ENCODE measurements at regions of chr19 and their contacts with region 1.

Region 1: GRCh38 chr19:16382775-16383543 is 58.3 kb downstream of the KLF2 start:
- DNase-seq: peak; percentile 59 to 90 (median 78)
- ATAC-seq: peak; percentile 69 to 80 (median 72)
- H3K4me3 ChIP-seq: peak overlapping the region in 1 of 2 donors; percentile 26
- H3K4me3 Mint-ChIP-seq: peak overlapping the region; percentile 58 to 69 (median 64)
- H3K27ac ChIP-seq: peak overlapping the region; percentile 69
- H3K27ac Mint-ChIP-seq: peak overlapping the region; percentile 92 to 95
- H3K4me1 ChIP-seq: peaks cover 26 to 79% of the 10 kb centered on the region in 2 experiments
- H3K4me1 Mint-ChIP-seq: peaks cover 64 to 66% (median 65%) of the 10 kb centered on the region in 3 donors
- H3K27me3 ChIP-seq: no peaks in the 10 kb centered on the region
- H3K27me3 Mint-ChIP-seq: no peaks in the 10 kb centered on the region

Region 2: GRCh38 chr19:16247353-16248182 is 135.4 kb before region 1 on chr19:
- CTCF ChIA-PET with region 1: interaction called, 11 to 26 read pairs
- POLR2A ChIA-PET with region 1: interaction called, 3 to 4 read pairs
- DNase-seq: peak; percentile 37 to 89 (median 76)
- ATAC-seq: peak; percentile 73 to 90 (median 81)
- H3K4me3 ChIP-seq: peak overlapping the region in 1 of 2 donors; percentile 15
- H3K4me3 Mint-ChIP-seq: peak overlapping the region in 2 of 3 donors; percentile 17 to 51
- H3K27ac ChIP-seq: no peak overlapping the region
- H3K27ac Mint-ChIP-seq: peak overlapping the region; percentile 35 to 83
- H3K4me1 ChIP-seq: peaks cover 22 to 34% of the 10 kb centered on the region in 2 experiments
- H3K4me1 Mint-ChIP-seq: peaks cover 20 to 41% (median 21%) of the 10 kb centered on the region in 3 donors
- H3K27me3 ChIP-seq: no peaks in the 10 kb centered on the region
- H3K27me3 Mint-ChIP-seq: no peaks in the 10 kb centered on the region

Region 3: DNA sequence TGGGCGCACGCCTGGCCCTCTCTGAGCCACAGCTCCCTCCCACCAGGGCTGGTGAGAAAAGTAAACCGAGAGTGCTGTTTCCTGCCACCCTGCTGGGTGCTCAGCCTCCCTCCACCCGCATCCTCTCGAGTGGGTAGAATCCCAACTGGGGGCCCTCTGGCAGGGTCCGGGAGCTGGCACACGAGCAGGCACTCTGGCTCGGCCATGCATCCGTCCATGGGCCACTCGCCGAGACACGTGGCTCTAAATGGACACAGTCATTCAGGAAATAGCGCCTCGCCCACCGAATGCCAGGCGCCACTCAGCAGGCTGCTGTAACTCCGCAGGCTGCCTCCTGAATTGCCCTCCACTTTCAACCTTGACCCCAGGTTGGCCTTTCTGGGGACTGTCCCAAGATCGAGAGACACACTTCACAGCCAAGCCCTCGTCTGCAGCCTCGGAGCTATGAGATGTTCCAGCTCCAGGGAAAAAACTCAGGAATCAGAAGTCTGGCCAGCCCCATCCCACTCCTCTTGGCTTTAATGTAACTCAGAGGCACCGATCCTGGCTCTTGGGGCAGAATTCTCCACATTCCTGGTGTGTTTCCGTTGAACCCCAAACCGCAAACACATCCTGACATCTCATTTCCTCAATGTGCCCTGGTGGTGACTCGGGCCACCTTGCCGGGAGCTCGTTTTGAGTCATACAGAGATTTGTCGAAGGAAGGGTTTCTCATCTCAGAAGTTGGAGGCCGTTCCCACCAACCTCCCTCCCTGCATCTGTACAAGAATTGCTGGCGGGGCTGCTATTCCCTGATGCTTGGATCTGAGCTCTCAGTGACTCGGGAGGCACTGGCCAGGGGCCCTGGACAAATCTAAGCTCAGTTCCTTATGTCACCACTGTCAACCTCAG is 44.2 kb before region 1 on chr19:
- CTCF ChIA-PET with region 1: interaction called, 4 to 16 read pairs
- POLR2A ChIA-PET with region 1: interaction called in 1 of 2 experiments, 3 read pairs
- DNase-seq: peak in 21 of 35 experiments; percentile 27 to 72 (median 44)
- ATAC-seq: peak; percentile 35 to 84 (median 79)
- H3K4me3 ChIP-seq: peak overlapping the region; percentile 30 to 35
- H3K4me3 Mint-ChIP-seq: peak overlapping the region; percentile 71 to 84 (median 83)
- H3K27ac ChIP-seq: peak overlapping the region; percentile 64
- H3K27ac Mint-ChIP-seq: peak overlapping the region; percentile 93 to 98
- H3K4me1 ChIP-seq: peaks cover 24 to 94% of the 10 kb centered on the region in 2 experiments
- H3K4me1 Mint-ChIP-seq: peaks cover 66 to 77% (median 71%) of the 10 kb centered on the region in 3 donors
- H3K27me3 ChIP-seq: no peaks in the 10 kb centered on the region
- H3K27me3 Mint-ChIP-seq: no peaks in the 10 kb centered on the region

Region 4: DNA sequence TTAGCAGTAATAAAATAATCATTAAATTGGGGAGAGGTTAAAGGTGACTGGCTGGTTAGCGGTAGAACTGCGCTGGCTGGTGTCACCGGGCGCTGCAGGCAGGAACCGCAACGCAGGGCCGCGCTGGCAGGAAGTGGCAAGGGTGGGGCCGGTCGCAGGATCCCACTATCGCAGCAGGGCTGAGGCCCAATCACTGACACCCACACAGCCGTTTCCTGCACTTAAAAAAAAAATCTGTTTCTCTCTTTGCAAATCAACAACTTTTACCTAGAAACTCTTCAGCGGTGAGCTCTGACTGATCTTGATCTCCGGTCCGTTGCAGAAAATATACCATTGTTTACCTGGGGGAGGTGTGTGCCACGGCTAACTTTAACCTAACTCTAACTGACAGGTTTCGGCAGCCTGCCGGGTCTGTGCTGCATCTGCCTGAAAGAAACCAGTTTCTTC is 11.4 kb before region 1 on chr19:
- CTCF ChIA-PET with region 1: interaction called, 4 to 48 read pairs
- POLR2A ChIA-PET with region 1: interaction called, 19 read pairs
- DNase-seq: peak; percentile 80 to 97 (median 93)
- ATAC-seq: peak; percentile 55 to 66 (median 61)
- H3K4me3 ChIP-seq: peak overlapping the region; percentile 44 to 55
- H3K4me3 Mint-ChIP-seq: no peak overlapping the region
- H3K27ac ChIP-seq: peak overlapping the region; percentile 96
- H3K27ac Mint-ChIP-seq: no peak overlapping the region
- H3K4me1 ChIP-seq: peaks cover 78 to 98% of the 10 kb centered on the region in 2 experiments
- H3K4me1 Mint-ChIP-seq: peaks cover 7 to 40% (median 7%) of the 10 kb centered on the region in 3 donors
- H3K27me3 ChIP-seq: no peaks in the 10 kb centered on the region
- H3K27me3 Mint-ChIP-seq: no peaks in the 10 kb centered on the region

Measured in T-cell (primary cell).